ENCODE measurements at regions of chr1 and their contacts with region 1.

Region 1: DNA sequence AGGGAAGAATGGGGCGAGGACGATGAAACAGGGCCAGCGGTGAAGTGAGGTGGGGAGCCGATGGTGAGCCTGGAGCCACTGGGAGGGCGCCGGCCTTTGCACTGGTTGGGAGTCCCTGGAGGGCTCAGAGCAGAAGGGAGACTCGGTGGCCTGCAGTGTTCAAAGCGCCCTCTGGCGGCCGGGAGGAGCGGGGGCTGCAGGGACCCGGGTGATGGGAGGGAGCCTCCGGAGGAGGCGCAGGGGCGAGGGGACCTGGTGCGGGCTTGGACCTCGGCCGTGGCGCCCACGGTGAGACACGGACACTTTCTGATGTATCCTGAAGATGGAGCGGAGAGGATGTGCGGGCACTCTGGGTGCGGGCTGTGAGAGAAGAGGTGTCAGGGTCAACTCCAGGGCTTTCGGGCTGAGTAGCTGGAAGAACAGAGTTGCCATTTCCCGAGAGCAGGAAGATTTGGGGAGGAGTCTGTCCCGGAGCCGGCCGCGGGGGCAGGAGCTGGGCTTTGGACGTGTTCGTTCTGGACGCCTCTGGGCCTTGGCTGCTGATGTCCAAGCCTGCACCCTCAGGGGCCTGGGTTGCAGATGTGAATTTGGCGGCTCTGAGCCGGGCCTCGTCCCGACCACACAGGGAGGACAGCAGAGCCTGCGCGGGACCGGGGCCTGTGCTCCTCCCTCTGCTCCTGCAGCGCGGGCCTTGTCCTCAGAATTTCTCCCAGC is 29.7 kb downstream of the HEYL start:
- DNase-seq: peak; percentile 55 to 86 (median 78)
- ATAC-seq: peak; percentile 72
- H3K4me3 ChIP-seq: no peak overlapping the region
- H3K4me3 Mint-ChIP-seq: no peak overlapping the region
- H3K27ac ChIP-seq: no peak overlapping the region
- H3K27ac Mint-ChIP-seq: no peak overlapping the region
- H3K4me1 ChIP-seq: no peaks in the 10 kb centered on the region
- H3K4me1 Mint-ChIP-seq: peaks cover 8% of the 10 kb centered on the region
- H3K27me3 ChIP-seq: peaks cover 0 to 2% of the 10 kb centered on the region in 2 experiments
- H3K27me3 Mint-ChIP-seq: peaks cover 12% of the 10 kb centered on the region
- CTCF ChIP-seq: peak; percentile 55

Region 2: DNA sequence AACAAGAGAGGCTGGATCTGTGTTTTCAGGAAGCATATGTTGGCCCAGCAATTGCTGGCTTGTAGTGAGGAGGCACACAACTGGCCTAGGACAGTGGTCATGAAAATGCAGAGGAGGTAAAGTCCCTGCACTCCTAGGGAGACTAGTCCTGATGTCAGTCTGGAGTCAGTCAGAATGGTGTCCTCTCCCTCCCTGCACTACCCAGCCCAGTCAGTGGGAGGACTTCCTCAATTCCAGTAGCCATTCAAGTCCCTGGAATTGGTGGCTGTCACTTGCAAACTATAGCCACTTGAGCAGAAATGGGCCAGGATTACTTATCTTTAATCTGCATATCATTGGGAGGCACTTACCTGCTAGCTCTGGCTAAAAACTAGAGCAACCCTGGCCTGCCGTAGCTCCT is 565.0 kb before region 1 on chr1:
- CTCF ChIA-PET with region 1: no interaction called
- POLR2A ChIA-PET with region 1: no interaction called
- intact Hi-C with region 1: no loop called
- DNase-seq: no peak
- ATAC-seq: no peak
- H3K4me3 ChIP-seq: no peak overlapping the region
- H3K4me3 Mint-ChIP-seq: no peak overlapping the region
- H3K27ac ChIP-seq: no peak overlapping the region
- H3K27ac Mint-ChIP-seq: no peak overlapping the region
- H3K4me1 ChIP-seq: peaks cover 2% of the 10 kb centered on the region
- H3K4me1 Mint-ChIP-seq: peaks cover 1% of the 10 kb centered on the region
- H3K27me3 ChIP-seq: no peaks in the 10 kb centered on the region
- H3K27me3 Mint-ChIP-seq: no peaks in the 10 kb centered on the region
- CTCF ChIP-seq: no peak

Region 3: DNA sequence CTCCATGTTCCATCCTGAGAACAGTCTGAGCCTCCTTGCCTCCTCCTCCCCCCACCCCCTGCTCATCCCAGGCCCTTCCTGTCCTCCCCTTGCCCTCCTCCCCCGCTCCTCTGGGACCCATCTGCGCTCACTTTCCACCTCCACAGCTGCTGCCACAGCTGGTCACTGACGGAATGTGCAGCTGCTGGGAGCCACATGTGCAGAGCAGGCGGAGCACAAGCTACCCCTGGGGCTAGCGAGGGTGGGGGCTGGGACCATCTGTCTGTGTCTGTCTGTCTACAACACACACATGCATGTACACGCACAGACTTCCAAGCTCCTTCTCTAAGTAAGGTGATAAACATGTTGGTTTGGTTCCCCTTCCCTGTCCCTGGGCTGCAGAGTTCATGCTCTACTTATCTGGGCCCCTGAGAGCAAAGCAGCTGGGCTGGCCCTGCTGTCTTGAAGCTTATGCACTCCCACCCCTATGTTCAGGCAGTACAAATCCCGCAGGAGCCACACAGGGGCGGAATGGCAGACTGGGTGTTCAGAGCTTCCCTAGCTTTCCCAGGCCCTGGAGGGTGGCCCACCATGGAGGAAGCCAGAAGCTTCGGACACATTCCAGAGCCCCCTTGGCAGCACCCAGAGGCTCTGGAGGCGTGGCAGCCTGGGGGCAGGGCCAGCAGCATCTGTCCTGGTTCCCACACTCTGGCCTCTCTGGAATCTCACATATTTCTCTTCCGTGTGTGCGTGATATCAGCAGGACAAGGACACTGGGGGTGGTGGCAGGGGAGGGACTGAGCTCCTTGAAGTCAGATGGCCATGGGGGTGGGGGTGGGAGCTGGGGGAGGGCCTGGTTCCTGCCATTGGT is 36.7 kb after region 1 on chr1:
- CTCF ChIA-PET with region 1: interaction called, 11 read pairs
- POLR2A ChIA-PET with region 1: no interaction called
- intact Hi-C with region 1: no loop called
- DNase-seq: no peak
- ATAC-seq: no peak
- H3K4me3 ChIP-seq: no peak overlapping the region
- H3K4me3 Mint-ChIP-seq: no peak overlapping the region
- H3K27ac ChIP-seq: no peak overlapping the region
- H3K27ac Mint-ChIP-seq: no peak overlapping the region
- H3K4me1 ChIP-seq: no peaks in the 10 kb centered on the region
- H3K4me1 Mint-ChIP-seq: no peaks in the 10 kb centered on the region
- H3K27me3 ChIP-seq: no peaks in the 10 kb centered on the region
- H3K27me3 Mint-ChIP-seq: no peaks in the 10 kb centered on the region
- CTCF ChIP-seq: no peak

Region 4: GRCh38 chr1:39659538-39659937 is 49.8 kb after region 1 on chr1:
- CTCF ChIA-PET with region 1: interaction called, 97 read pairs
- POLR2A ChIA-PET with region 1: no interaction called
- intact Hi-C with region 1: loop called in 1 of 2 experiments (anchors 1 kb)
- DNase-seq: no peak
- ATAC-seq: no peak
- H3K4me3 ChIP-seq: no peak overlapping the region
- H3K4me3 Mint-ChIP-seq: no peak overlapping the region
- H3K27ac ChIP-seq: no peak overlapping the region
- H3K27ac Mint-ChIP-seq: no peak overlapping the region
- H3K4me1 ChIP-seq: no peaks in the 10 kb centered on the region
- H3K4me1 Mint-ChIP-seq: peaks cover 4% of the 10 kb centered on the region
- H3K27me3 ChIP-seq: no peaks in the 10 kb centered on the region
- H3K27me3 Mint-ChIP-seq: peaks cover 6% of the 10 kb centered on the region
- CTCF ChIP-seq: no peak

Region 5: GRCh38 chr1:39672551-39672947 is 62.8 kb after region 1 on chr1:
- CTCF ChIA-PET with region 1: interaction called, 31 read pairs
- POLR2A ChIA-PET with region 1: no interaction called
- intact Hi-C with region 1: loop called in 1 of 2 experiments (anchors 1 kb)
- DNase-seq: peak in 6 of 9 experiments; percentile 7 to 70 (median 50)
- ATAC-seq: peak; percentile 45
- H3K4me3 ChIP-seq: peak overlapping the region in 1 of 2 experiments; percentile 48
- H3K4me3 Mint-ChIP-seq: peak overlapping the region; percentile 74
- H3K27ac ChIP-seq: no peak overlapping the region
- H3K27ac Mint-ChIP-seq: no peak overlapping the region
- H3K4me1 ChIP-seq: peaks cover 17% of the 10 kb centered on the region
- H3K4me1 Mint-ChIP-seq: peaks cover 9% of the 10 kb centered on the region
- H3K27me3 ChIP-seq: peaks cover 10 to 15% of the 10 kb centered on the region in 2 experiments
- H3K27me3 Mint-ChIP-seq: peaks cover 29% of the 10 kb centered on the region
- CTCF ChIP-seq: peak; percentile 38

Region 6: GRCh38 chr1:39720094-39720999 is 110.6 kb after region 1 on chr1:
- CTCF ChIA-PET with region 1: interaction called, 171 read pairs
- POLR2A ChIA-PET with region 1: no interaction called
- intact Hi-C with region 1: loop called (anchors 1 kb)
- DNase-seq: peak in 3 of 9 experiments; percentile 12 to 80 (median 72)
- ATAC-seq: peak; percentile 85
- H3K4me3 ChIP-seq: no peak overlapping the region
- H3K4me3 Mint-ChIP-seq: no peak overlapping the region
- H3K27ac ChIP-seq: no peak overlapping the region
- H3K27ac Mint-ChIP-seq: no peak overlapping the region
- H3K4me1 ChIP-seq: no peaks in the 10 kb centered on the region
- H3K4me1 Mint-ChIP-seq: no peaks in the 10 kb centered on the region
- H3K27me3 ChIP-seq: no peaks in the 10 kb centered on the region
- H3K27me3 Mint-ChIP-seq: peaks cover 38% of the 10 kb centered on the region
- CTCF ChIP-seq: peak; percentile 91

Region 7: GRCh38 chr1:39738622-39739366 is 129.0 kb after region 1 on chr1 and contains the start of gene PPIE:
- CTCF ChIA-PET with region 1: interaction called, 10 read pairs
- POLR2A ChIA-PET with region 1: no interaction called
- intact Hi-C with region 1: no loop called
- DNase-seq: peak; percentile 87 to 97 (median 95)
- ATAC-seq: peak; percentile 98
- H3K4me3 ChIP-seq: peak within 1 kb of the TSS; percentile 76 to 91
- H3K4me3 Mint-ChIP-seq: peak within 1 kb of the TSS; percentile 97
- H3K27ac ChIP-seq: peak within 1 kb of the TSS; percentile 83 to 87
- H3K27ac Mint-ChIP-seq: peak within 1 kb of the TSS; percentile 96
- H3K4me1 ChIP-seq: peaks cover 23% of the 10 kb centered on the region
- H3K4me1 Mint-ChIP-seq: peaks cover 40% of the 10 kb centered on the region
- H3K27me3 ChIP-seq: peaks cover 0 to 10% of the 10 kb centered on the region in 2 experiments
- H3K27me3 Mint-ChIP-seq: peaks cover 24% of the 10 kb centered on the region
- CTCF ChIP-seq: no peak
- total RNA-seq, gene PPIE: 43.6 to 46.7 TPM

Region 8: GRCh38 chr1:39799770-39800470 is 190.1 kb after region 1 on chr1:
- CTCF ChIA-PET with region 1: interaction called, 14 read pairs
- POLR2A ChIA-PET with region 1: interaction called, 3 read pairs
- intact Hi-C with region 1: loop called in 1 of 2 experiments (anchors 1 kb)
- DNase-seq: peak; percentile 24 to 82 (median 68)
- ATAC-seq: peak; percentile 67
- H3K4me3 ChIP-seq: peak overlapping the region; percentile 14 to 38
- H3K4me3 Mint-ChIP-seq: peak overlapping the region; percentile 67
- H3K27ac ChIP-seq: peak overlapping the region; percentile 41 to 78
- H3K27ac Mint-ChIP-seq: peak overlapping the region; percentile 70
- H3K4me1 ChIP-seq: peaks cover 5% of the 10 kb centered on the region
- H3K4me1 Mint-ChIP-seq: peaks cover 8% of the 10 kb centered on the region
- H3K27me3 ChIP-seq: no peaks in the 10 kb centered on the region
- H3K27me3 Mint-ChIP-seq: no peaks in the 10 kb centered on the region
- CTCF ChIP-seq: peak; percentile 76